Heart left ventricle (tissue), 16 donors: ENCODE measurements at regions of chr4 and their contacts with region 1.

Region 1: GRCh38 chr4:108988464-108989195 is 225.8 kb upstream of the ETNPPL start:
- DNase-seq: no peak
- ATAC-seq: no peak
- H3K4me3 ChIP-seq: no peak overlapping the region
- H3K27ac ChIP-seq: no peak overlapping the region
- H3K4me1 ChIP-seq: no peaks in the 10 kb centered on the region
- H3K27me3 ChIP-seq: no peaks in the 10 kb centered on the region
- CTCF ChIP-seq: no peak
- POLR2A ChIP-seq: no peak

Region 2: GRCh38 chr4:109368661-109369060 is 380.0 kb after region 1 on chr4:
- intact Hi-C with region 1: loop called in 1 of 10 experiments (anchors 10 kb)
- DNase-seq: no peak
- ATAC-seq: no peak
- H3K4me3 ChIP-seq: no peak overlapping the region
- H3K27ac ChIP-seq: no peak overlapping the region
- H3K4me1 ChIP-seq: no peaks in the 10 kb centered on the region
- H3K27me3 ChIP-seq: no peaks in the 10 kb centered on the region
- CTCF ChIP-seq: no peak
- POLR2A ChIP-seq: no peak